Lower leg skin (tissue), 4 donors: ENCODE measurements at regions of chr15 and their contacts with region 1.

Region 1: GRCh38 chr15:55546718-55547117 is 38.7 kb upstream of the DNAAF4 start:
- DNase-seq: no peak
- H3K4me3 ChIP-seq: no peak overlapping the region
- CTCF ChIP-seq: no peak
- POLR2A ChIP-seq: no peak

Region 2: GRCh38 chr15:55518641-55519040 is 28.1 kb before region 1 on chr15:
- intact Hi-C with region 1: loop called (anchors 2 kb)
- DNase-seq: no peak
- H3K4me3 ChIP-seq: no peak overlapping the region
- CTCF ChIP-seq: no peak
- POLR2A ChIP-seq: no peak